ENCODE measurements at regions of chr1 and their contacts with region 1.

Region 1: GRCh38 chr1:42784946-42785693 is at the start of gene TMEM269:
- DNase-seq: peak; percentile 38
- H3K4me3 ChIP-seq: peak within 1 kb of the TSS; percentile 14 to 37 (median 35)
- H3K27ac ChIP-seq: no peak within 1 kb of the TSS
- H3K4me1 ChIP-seq: peaks cover 8% of the 10 kb centered on the region
- H3K27me3 ChIP-seq: no peaks in the 10 kb centered on the region
- CTCF ChIP-seq: no peak
- POLR2A ChIP-seq: peak; percentile 21
- total RNA-seq, gene TMEM269: not detected in 2 replicates

Region 2: DNA sequence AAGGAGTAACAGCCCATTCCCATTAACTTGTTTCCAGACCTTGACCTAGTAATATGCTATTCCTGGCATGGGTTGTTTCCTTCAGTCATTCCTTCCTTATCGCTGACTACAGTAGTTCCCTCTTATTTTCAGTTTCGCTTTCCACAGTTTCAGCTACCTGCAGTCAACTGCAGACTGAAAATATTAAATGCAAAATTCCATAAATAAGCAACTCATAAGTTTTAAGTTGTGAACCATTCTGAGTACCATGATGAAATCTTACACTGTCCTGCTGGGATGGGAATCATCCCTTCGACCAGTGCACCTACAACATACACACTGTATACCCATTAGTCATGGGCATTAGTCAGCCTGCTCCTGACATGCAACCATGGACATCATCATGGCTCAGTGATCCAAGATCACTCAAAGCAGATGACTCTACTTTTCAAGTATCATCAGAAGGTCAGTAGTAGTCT is 255.4 kb before region 1 on chr1:
- CTCF ChIA-PET with region 1: no interaction called
- POLR2A ChIA-PET with region 1: no interaction called
- dilution Hi-C with region 1: no loop called
- intact Hi-C with region 1: no loop called
- DNase-seq: peak; percentile 66
- H3K4me3 ChIP-seq: peak overlapping the region in 1 of 3 experiments; percentile 33
- H3K27ac ChIP-seq: no peak overlapping the region
- H3K4me1 ChIP-seq: no peaks in the 10 kb centered on the region
- H3K27me3 ChIP-seq: peaks cover 5 to 9% of the 10 kb centered on the region in 2 experiments
- CTCF ChIP-seq: no peak
- POLR2A ChIP-seq: no peak

Region 3: DNA sequence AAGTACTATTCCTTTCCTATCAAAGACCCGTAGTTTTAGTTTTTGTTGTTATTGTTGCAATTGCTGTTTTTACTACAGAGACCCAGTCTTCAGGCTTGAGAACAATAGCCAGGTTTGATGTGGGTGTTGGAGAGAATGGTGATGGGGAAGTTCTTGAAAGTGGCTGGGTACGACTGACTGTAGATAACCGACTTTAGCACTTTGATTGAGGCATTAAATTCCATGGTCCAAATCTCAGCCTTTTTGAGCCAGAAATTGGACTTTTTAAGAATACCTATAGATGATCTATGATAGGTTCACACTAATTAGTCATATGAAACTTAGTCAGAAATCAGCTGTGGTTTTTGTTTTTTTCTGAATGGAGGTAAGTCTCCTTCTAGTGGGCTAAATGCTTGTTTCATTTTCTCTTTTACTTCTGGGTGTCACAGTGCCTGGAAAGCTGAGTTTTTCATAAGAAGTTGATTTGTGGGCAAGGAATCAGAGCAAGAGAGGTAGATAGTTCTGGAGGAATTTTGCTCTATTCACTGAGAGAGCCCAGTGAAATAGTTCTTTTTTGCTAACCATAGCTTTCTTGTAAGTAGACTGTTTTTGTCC is 124.1 kb before region 1 on chr1:
- CTCF ChIA-PET with region 1: no interaction called
- POLR2A ChIA-PET with region 1: no interaction called
- dilution Hi-C with region 1: no loop called
- intact Hi-C with region 1: no loop called
- DNase-seq: no peak
- H3K4me3 ChIP-seq: no peak overlapping the region
- H3K27ac ChIP-seq: no peak overlapping the region
- H3K4me1 ChIP-seq: peaks cover 14% of the 10 kb centered on the region
- H3K27me3 ChIP-seq: no peaks in the 10 kb centered on the region
- CTCF ChIP-seq: no peak
- POLR2A ChIP-seq: no peak

Region 4: DNA sequence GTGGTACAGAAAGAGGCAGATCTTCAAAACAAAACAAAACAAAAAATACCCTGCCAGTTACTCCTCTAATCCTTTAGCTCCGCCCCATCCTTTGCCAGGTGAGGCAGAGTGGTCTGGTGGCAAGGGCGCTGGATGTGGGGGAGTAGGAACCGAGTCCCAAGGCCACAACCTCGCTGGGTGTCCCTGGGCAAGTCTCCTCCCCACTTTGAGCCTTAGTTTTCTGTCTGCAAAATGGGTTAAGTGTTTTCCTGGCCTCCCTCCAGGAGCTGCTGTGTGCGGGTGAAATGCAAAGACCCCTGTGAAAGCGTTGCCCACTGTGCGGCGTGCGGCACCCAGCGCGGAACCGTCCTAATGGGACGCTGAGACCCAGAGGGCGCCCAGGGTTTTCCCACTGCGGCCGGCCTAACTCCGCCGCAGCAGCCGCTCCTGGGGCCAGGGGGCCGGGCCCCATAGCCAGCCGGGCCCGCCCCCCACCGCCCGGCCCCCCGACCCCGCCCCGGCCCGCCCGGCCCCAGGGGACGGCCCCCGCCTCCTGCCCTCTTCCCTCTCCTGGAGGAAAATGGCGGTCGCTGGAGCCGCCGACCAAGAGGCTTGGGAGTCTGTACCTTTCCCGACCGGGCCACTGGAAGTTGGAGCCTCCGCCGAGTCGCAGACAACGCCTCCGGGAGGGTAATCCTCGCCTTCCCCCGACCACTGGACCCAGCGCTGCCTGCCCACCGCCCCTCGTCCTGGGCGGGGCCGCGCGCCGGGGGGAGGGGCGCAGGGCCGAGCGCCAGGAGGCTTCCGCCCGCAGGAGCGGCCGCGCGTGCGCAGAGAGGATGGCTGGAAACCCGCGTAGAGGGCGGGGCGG is 31.7 kb after region 1 on chr1 and contains the starts of genes ERMAP and SVBP:
- CTCF ChIA-PET with region 1: no interaction called
- POLR2A ChIA-PET with region 1: interaction called, 3 read pairs
- dilution Hi-C with region 1: no loop called
- intact Hi-C with region 1: loop called (anchors 2 kb)
- DNase-seq: peak; percentile 89
- H3K4me3 ChIP-seq: peak within 1 kb of the TSS; percentile 73 to 87 (median 74)
- H3K27ac ChIP-seq: peak within 1 kb of the TSS; percentile 91
- H3K4me1 ChIP-seq: peaks cover 18% of the 10 kb centered on the region
- H3K27me3 ChIP-seq: no peaks in the 10 kb centered on the region
- CTCF ChIP-seq: no peak
- POLR2A ChIP-seq: peak; percentile 89
- total RNA-seq, gene ERMAP: 7.8 and 7.9 TPM in 2 replicates
- total RNA-seq, gene SVBP: 24.1 and 24.7 TPM in 2 replicates

Region 5: GRCh38 chr1:42904434-42904833 is 119.3 kb after region 1 on chr1:
- CTCF ChIA-PET with region 1: no interaction called
- POLR2A ChIA-PET with region 1: no interaction called
- dilution Hi-C with region 1: no loop called
- intact Hi-C with region 1: no loop called
- DNase-seq: no peak
- H3K4me3 ChIP-seq: no peak overlapping the region
- H3K27ac ChIP-seq: no peak overlapping the region
- H3K4me1 ChIP-seq: no peaks in the 10 kb centered on the region
- H3K27me3 ChIP-seq: peaks cover 5 to 16% of the 10 kb centered on the region in 2 experiments
- CTCF ChIP-seq: no peak
- POLR2A ChIP-seq: no peak

Measured in endothelial cell of umbilical vein (primary cell).